ENCODE measurements at regions of chr2 and their contacts with region 1.

Region 1: DNA sequence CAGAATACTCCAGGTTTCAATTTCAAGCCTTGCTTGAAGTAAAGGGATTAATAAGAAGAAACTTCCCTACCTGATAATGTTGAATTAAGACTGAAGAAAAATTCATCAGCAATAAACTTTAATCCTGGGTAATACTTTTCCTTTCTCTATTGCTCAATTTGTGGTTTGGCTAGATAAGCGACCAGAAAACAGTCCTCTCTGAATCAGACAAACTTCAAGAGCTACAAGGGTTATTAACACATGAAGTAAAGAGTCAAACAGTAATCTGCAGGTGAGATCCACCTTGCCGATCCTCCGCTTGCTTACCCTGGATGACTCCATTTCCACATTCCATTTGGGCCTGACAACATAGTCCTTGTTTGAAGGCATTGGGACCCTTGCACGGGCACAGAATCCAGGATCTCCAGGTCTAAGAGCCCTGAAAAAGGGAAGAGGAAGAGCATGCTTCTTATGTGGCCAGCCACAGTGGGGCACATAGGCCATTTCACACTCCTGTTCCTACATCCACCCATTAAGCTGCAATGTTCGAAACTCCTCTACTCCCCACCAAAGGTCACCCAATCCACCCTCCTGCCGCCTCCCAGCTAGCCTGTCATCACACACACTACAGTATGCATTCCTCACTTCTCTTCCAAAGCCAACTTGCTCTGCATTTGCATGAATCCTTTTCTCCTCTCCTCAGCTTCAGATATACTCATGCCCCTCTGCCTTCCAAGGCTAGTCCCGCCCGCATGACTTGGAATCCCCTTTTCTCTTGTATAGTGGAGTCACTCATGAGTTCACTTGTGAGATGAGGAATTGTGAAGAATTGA is 39.8 kb downstream of the IWS1 start:
- DNase-seq: no peak
- H3K4me3 ChIP-seq: no peak overlapping the region
- CTCF ChIP-seq: no peak
- POLR2A ChIP-seq: no peak

Region 2: DNA sequence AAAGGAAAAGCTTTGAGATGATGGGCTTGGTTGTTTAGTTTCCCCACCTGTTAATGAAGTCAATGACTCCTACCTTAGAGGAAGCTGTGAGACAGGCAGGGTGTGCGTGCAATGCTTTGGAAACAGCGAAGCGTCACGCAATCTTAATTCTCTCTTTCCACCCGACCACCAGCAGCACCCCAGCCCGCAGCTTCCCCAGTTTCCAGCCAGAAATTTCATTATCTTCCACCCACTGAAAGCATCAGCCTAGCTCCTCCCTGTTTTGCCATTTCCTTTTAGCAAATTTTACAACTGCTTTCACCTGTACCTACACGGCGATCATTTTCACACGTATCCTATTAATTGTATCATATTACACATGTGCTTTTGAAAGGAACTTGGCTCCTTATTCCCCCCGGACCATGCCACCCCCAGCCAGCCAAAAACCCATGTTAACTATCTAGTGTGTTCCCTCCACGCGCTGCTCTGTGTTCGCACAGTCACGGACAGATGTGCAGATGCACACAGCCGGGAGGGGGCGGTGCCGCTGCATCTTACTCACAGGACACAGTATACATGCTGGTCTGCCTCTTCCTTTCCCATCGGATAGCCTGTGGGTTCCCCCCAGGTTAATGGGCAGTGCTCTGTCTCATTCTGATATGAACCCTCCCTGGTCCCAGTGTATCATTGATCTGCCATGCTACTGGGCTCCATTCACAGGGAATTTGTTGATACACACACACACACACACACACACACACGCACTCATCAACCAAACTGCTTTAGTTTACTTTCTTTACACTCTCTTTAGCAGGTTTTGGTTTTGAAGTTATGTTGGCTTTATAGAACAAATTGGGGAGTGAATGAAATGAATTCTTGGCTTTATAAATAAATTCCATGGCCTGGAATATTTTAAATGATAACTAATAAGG is 288.7 kb before region 1 on chr2:
- intact Hi-C with region 1: loop called (anchors 10 kb)
- DNase-seq: no peak
- H3K4me3 ChIP-seq: no peak overlapping the region
- CTCF ChIP-seq: no peak
- POLR2A ChIP-seq: no peak

Region 3: DNA sequence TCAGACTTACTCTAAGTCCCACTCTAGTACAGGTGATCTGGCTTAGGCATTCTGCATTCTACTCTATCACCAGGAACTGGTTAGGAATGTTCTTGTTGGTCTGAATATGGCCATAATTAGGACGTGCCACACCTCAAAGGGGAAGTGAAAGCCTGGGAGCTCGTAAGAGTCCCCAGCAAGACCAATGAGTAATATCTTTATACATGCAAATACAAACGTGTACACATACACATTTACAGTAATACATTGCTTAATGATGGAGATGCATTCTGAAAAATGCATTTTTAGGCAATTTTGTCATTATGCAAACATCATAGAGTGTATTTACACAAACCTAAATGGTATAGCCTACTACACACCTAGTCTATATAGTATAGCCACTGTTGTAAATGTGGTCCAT is 173.0 kb before region 1 on chr2:
- intact Hi-C with region 1: loop called (anchors 10 kb)
- DNase-seq: no peak
- H3K4me3 ChIP-seq: no peak overlapping the region
- CTCF ChIP-seq: no peak
- POLR2A ChIP-seq: no peak